ENCODE measurements at regions of chr19 and their contacts with region 1.

Region 1: DNA sequence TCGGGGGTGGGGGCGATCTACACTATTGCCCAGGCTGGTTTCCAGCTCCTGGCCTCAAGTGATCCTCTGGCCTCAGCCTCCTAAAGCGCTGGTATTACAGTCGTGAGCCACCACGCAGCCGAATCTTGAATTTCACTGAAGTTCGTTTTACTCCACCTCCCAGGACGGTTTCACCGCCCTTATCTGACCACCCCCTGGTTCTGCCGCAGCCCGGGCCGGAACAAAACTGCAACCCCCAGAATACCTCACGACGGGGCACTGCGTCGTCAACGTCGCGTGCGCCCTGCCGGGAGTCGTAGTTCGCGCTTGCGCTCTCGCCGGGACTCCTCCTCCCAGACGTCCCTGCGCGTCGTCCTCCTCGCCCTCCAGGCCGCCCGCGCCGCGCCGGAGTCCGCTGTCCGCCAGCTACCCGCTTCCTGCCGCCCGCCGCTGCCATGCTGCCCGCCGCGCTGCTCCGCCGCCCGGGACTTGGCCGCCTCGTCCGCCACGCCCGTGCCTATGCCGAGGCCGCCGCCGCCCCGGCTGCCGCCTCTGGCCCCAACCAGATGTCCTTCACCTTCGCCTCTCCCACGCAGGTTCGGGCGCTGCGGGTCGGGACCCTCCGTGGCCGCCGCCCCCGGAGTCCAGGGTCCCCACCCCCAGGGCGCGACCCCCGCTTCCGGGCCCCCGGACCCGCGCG is at the start of gene ATP5F1D:
- DNase-seq: peak; percentile 94
- ATAC-seq: peak; percentile 70
- H3K4me3 ChIP-seq: peak within 1 kb of the TSS; percentile 28 to 92 (median 57)
- H3K4me3 Mint-ChIP-seq: peak within 1 kb of the TSS; percentile 88
- H3K27ac ChIP-seq: peak within 1 kb of the TSS; percentile 24 to 65
- H3K27ac Mint-ChIP-seq: peak within 1 kb of the TSS; percentile 85
- H3K4me1 ChIP-seq: peaks cover 44 to 70% of the 10 kb centered on the region in 2 donors
- H3K4me1 Mint-ChIP-seq: peaks cover 40% of the 10 kb centered on the region
- H3K27me3 ChIP-seq: peaks cover 0 to 11% (median 4%) of the 10 kb centered on the region in 4 experiments
- H3K27me3 Mint-ChIP-seq: peaks cover 8% of the 10 kb centered on the region
- CTCF ChIP-seq: no peak
- total RNA-seq, gene ATP5F1D: 131 and 150 TPM in 2 replicates

Region 2: GRCh38 chr19:412356-413355 is 828.9 kb before region 1 on chr19:
- CTCF ChIA-PET with region 1: no interaction called
- POLR2A ChIA-PET with region 1: no interaction called
- intact Hi-C with region 1: no loop called
- DNase-seq: no peak
- ATAC-seq: no peak
- H3K4me3 ChIP-seq: no peak overlapping the region
- H3K4me3 Mint-ChIP-seq: no peak overlapping the region
- H3K27ac ChIP-seq: no peak overlapping the region
- H3K27ac Mint-ChIP-seq: no peak overlapping the region
- H3K4me1 ChIP-seq: peaks cover 14 to 16% of the 10 kb centered on the region in 2 donors
- H3K4me1 Mint-ChIP-seq: peaks cover 6% of the 10 kb centered on the region
- H3K27me3 ChIP-seq: peaks cover 0 to 32% (median 10%) of the 10 kb centered on the region in 4 experiments
- H3K27me3 Mint-ChIP-seq: peaks cover 13% of the 10 kb centered on the region
- CTCF ChIP-seq: no peak

Region 3: DNA sequence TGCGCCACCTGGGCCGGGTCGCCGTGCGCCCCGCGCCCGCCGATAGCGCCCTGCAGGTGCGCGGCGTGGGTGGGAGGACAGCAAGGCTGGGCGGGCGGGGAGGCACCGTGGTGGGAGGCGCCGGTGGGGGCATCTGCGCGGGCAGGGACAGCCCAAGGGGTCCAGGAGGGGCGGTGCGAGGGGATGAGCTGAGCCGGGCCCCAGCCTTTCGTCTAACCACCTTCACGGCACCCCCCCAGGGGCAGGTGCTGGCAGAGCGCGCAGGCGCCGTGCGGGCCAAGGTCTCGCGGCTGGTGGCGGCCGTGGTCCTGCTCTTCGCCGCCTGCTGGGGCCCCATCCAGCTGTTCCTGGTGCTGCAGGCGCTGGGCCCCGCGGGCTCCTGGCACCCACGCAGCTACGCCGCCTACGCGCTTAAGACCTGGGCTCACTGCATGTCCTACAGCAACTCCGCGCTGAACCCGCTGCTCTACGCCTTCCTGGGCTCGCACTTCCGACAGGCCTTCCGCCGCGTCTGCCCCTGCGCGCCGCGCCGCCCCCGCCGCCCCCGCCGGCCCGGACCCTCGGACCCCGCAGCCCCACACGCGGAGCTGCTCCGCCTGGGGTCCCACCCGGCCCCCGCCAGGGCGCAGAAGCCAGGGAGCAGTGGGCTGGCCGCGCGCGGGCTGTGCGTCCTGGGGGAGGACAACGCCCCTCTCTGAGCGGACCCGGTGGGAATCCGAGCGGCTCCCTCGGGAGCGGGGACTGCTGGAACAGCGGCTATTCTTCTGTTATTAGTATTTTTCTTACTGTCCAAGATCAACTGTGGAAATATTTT is 321.3 kb before region 1 on chr19:
- CTCF ChIA-PET with region 1: interaction called, 3 read pairs
- POLR2A ChIA-PET with region 1: no interaction called
- intact Hi-C with region 1: loop called (anchors 2 kb)
- DNase-seq: peak; percentile 87
- ATAC-seq: peak; percentile 39
- H3K4me3 ChIP-seq: peak overlapping the region in 4 of 5 experiments; percentile 40 to 70 (median 54)
- H3K4me3 Mint-ChIP-seq: peak overlapping the region; percentile 85
- H3K27ac ChIP-seq: peak overlapping the region in 1 of 2 donors; percentile 41
- H3K27ac Mint-ChIP-seq: peak overlapping the region; percentile 38
- H3K4me1 ChIP-seq: peaks cover 49 to 60% of the 10 kb centered on the region in 2 donors
- H3K4me1 Mint-ChIP-seq: peaks cover 35% of the 10 kb centered on the region
- H3K27me3 ChIP-seq: peaks cover 0 to 32% (median 4%) of the 10 kb centered on the region in 4 experiments
- H3K27me3 Mint-ChIP-seq: no peaks in the 10 kb centered on the region
- CTCF ChIP-seq: no peak

Region 4: DNA sequence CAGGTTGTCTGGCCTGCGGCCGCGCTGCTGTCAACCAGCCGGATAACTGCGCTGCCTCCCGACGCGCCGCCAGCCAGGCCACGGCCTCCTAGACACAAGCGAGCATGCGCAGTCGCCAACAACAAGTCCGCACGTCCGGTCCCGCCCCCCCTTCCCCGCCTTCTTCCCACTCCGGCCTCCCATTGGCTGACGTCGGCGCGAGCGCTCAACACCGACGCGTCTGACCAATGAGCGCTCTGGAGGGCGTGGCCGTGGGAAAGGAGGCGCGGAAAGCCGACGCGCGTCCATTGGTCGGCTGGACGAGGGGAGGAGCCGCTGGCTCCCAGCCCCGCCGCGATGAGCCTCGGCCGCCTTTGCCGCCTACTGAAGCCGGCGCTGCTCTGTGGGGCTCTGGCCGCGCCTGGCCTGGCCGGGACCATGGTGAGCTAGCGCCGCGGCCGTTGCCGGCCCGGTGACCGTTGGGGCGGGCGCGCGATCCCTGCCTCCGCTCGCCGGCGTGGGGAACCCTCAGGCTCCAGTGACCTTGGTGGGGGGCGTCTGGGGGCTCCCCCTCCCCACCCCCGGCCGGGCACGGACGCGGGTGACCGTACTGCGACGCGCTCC is 137.7 kb before region 1 on chr19 and contains the start of gene GPX4:
- CTCF ChIA-PET with region 1: interaction called, 3 read pairs
- POLR2A ChIA-PET with region 1: interaction called, 6 read pairs
- intact Hi-C with region 1: loop called (anchors 5 kb)
- DNase-seq: peak; percentile 100
- ATAC-seq: peak; percentile 86
- H3K4me3 ChIP-seq: peak within 1 kb of the TSS; percentile 42 to 90 (median 80)
- H3K4me3 Mint-ChIP-seq: peak within 1 kb of the TSS; percentile 81
- H3K27ac ChIP-seq: peak within 1 kb of the TSS; percentile 88 to 100
- H3K27ac Mint-ChIP-seq: peak within 1 kb of the TSS; percentile 94
- H3K4me1 ChIP-seq: peaks cover 26 to 58% of the 10 kb centered on the region in 2 donors
- H3K4me1 Mint-ChIP-seq: peaks cover 38% of the 10 kb centered on the region
- H3K27me3 ChIP-seq: no peaks in the 10 kb centered on the region
- H3K27me3 Mint-ChIP-seq: no peaks in the 10 kb centered on the region
- CTCF ChIP-seq: no peak
- total RNA-seq, gene GPX4: 202 and 213 TPM in 2 replicates

Region 5: DNA sequence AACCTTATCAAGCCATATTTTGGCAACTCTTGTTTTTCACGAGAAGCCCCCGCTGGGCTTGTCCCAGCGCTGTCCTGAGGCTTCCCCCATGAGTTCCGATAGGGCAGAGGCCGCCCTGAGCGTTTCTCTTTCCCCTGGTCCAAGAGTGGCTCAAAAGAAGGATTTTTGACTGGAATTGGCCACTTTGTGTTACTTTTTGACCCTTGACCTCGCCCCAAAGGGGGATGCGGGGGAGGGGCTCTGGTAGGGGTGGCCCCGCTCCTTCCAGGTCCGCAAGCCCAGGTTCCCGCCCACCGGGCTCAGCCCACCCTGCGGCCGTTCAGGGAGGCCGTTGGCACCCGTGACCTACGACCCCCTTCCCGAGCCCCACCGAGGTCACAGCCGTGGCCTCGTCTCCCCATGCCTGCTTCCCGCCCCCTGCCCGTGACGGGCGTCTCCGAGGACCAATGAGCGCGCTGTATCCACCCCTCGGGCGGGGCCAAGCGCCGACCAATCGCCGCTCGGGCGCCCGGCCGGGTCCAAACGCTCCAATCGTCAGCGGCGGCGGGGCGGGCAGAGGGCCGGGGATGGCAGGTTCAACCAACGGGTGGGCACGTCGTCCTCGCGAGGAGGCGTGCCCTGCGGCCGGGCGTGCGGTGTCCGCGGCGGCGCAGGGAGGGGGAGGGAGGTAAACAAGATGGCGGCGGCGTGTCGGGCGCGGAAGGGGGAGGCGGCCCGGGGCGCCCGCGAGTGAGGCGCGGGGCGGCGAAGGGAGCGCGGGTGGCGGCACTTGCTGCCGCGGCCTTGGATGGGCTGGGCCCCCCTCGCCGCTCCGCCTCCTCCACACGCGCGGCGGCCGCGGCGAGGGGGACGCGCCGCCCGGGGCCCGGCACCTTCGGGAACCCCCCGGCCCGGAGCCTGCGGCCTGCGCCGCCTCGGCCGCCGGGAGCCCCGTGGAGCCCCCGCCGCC is 36.2 kb before region 1 on chr19 and contains the start of gene STK11:
- CTCF ChIA-PET with region 1: interaction called, 3 read pairs
- POLR2A ChIA-PET with region 1: interaction called, 5 read pairs
- intact Hi-C with region 1: loop called (anchors 1 kb)
- DNase-seq: peak; percentile 99
- ATAC-seq: peak; percentile 92
- H3K4me3 ChIP-seq: peak within 1 kb of the TSS; percentile 51 to 77 (median 63)
- H3K4me3 Mint-ChIP-seq: peak within 1 kb of the TSS; percentile 94
- H3K27ac ChIP-seq: peak within 1 kb of the TSS; percentile 43 to 65
- H3K27ac Mint-ChIP-seq: peak within 1 kb of the TSS; percentile 92
- H3K4me1 ChIP-seq: peaks cover 16 to 32% of the 10 kb centered on the region in 2 donors
- H3K4me1 Mint-ChIP-seq: peaks cover 25% of the 10 kb centered on the region
- H3K27me3 ChIP-seq: no peaks in the 10 kb centered on the region
- H3K27me3 Mint-ChIP-seq: no peaks in the 10 kb centered on the region
- CTCF ChIP-seq: no peak
- total RNA-seq, gene STK11: 89.9 and 91.8 TPM in 2 replicates

Region 6: DNA sequence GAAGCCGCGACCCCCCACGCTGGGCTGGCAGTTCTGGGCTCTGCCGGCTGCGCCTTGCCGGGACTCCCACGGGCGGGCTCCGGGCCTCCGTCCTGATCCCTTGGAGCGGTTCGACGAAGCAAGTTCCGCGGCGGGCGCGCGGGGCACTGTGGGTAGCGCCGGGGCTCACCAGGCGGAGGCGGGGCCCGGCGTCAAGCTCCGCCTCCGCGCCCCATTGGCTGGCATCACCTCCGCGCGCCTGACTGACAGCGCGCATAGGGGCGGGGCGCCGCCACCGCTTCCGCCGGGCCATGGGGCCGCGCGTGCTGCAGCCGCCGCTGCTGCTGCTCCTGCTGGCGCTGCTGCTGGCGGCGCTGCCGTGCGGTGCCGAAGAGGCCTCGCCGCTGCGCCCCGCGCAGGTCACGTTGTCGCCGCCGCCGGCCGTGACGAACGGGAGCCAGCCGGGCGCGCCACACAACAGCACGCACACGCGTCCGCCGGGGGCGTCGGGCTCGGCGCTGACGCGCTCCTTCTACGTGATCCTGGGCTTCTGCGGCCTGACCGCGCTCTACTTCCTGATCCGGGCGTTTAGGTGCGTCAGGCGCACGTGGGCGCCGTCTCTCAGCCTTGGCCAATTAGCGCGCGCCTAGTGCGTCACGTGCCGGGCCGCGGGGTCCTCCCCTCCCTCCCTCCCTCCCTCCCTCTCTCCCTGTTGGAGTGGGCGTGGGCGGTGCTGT is 33.9 kb after region 1 on chr19 and contains the start of gene FAM174C:
- CTCF ChIA-PET with region 1: interaction called, 51 read pairs
- POLR2A ChIA-PET with region 1: interaction called, 15 read pairs
- intact Hi-C with region 1: no loop called
- DNase-seq: peak; percentile 99
- ATAC-seq: peak; percentile 82
- H3K4me3 ChIP-seq: peak within 1 kb of the TSS; percentile 30 to 85 (median 75)
- H3K4me3 Mint-ChIP-seq: peak within 1 kb of the TSS; percentile 89
- H3K27ac ChIP-seq: peak within 1 kb of the TSS; percentile 93 to 97
- H3K27ac Mint-ChIP-seq: peak within 1 kb of the TSS; percentile 94
- H3K4me1 ChIP-seq: peaks cover 39 to 63% of the 10 kb centered on the region in 2 donors
- H3K4me1 Mint-ChIP-seq: peaks cover 49% of the 10 kb centered on the region
- H3K27me3 ChIP-seq: no peaks in the 10 kb centered on the region
- H3K27me3 Mint-ChIP-seq: no peaks in the 10 kb centered on the region
- CTCF ChIP-seq: peak; percentile 15
- total RNA-seq, gene FAM174C: 34.5 and 41.1 TPM in 2 replicates

Region 7: DNA sequence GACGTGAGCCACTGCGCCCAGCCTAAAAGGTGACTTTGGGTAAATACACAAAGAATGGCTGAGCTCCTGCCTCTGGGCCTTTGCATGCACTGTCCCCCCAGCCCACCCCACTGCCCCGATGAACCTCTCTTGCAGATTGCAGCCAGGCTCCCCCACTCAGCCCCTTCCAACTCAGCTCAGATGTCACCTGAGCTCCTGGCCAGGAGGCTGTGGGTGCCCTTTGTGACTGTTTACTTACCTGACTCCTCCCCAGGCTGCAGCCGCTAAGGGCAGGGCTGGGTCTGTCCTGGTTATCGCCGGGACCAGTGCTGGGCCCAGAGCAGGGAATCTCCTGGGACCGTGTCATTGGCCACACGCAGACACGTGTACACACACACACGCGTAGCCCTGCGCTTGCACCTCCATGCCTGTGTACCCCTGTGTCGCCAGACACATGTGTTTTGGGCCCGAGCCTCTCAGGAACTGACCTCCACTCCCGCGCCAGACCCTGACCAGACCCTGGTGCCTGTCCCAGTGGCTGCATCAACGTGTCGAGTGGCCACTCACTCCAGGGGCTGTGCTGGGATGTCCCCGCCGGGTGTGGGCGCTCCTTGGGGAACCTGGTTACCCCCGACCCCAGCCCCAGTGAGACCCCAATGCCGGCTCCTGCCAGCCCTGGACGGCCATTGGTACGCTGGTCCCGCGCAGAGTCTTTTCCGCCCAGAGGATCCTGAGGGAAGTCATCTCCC is 62.8 kb after region 1 on chr19:
- CTCF ChIA-PET with region 1: no interaction called
- POLR2A ChIA-PET with region 1: no interaction called
- intact Hi-C with region 1: no loop called
- DNase-seq: no peak
- ATAC-seq: no peak
- H3K4me3 ChIP-seq: no peak overlapping the region
- H3K4me3 Mint-ChIP-seq: no peak overlapping the region
- H3K27ac ChIP-seq: no peak overlapping the region
- H3K27ac Mint-ChIP-seq: no peak overlapping the region
- H3K4me1 ChIP-seq: no peaks in the 10 kb centered on the region
- H3K4me1 Mint-ChIP-seq: peaks cover 5% of the 10 kb centered on the region
- H3K27me3 ChIP-seq: no peaks in the 10 kb centered on the region
- H3K27me3 Mint-ChIP-seq: no peaks in the 10 kb centered on the region
- CTCF ChIP-seq: no peak